ENCODE measurements at regions of chr14 and their contacts with region 1.

Region 1: GRCh38 chr14:79971330-79971729 is 240.0 kb downstream of the DIO2 start:
- DNase-seq: peak; percentile 15
- H3K4me3 ChIP-seq: no peak overlapping the region
- H3K27ac ChIP-seq: no peak overlapping the region
- H3K27me3 ChIP-seq: no peaks in the 10 kb centered on the region
- CTCF ChIP-seq: no peak

Region 2: GRCh38 chr14:78921856-78922255 is 1049.5 kb before region 1 on chr14:
- CTCF ChIA-PET with region 1: no interaction called
- POLR2A ChIA-PET with region 1: interaction called, 11 read pairs
- DNase-seq: peak; percentile 49
- H3K4me3 ChIP-seq: no peak overlapping the region
- H3K27ac ChIP-seq: no peak overlapping the region
- H3K27me3 ChIP-seq: no peaks in the 10 kb centered on the region
- CTCF ChIP-seq: no peak

Region 3: DNA sequence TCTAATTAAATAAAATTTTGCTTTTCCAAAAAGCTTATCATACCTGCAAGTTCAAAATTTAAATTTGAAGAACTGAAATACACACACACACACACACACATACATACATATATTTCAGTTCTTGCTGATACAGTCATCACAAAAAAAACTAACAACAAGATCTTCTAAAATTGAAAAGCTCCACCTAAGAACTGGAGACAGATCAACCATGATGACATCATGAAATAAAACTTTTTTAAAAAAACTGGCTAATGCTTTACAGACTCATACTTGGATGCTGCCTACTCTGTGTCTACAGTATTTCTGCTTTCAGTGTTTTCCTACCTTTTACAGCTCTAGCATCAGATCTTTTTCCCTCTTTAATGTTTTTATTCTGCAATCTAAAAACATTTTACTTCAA is 21.4 kb before region 1 on chr14:
- CTCF ChIA-PET with region 1: interaction called, 25 read pairs
- POLR2A ChIA-PET with region 1: no interaction called
- DNase-seq: no peak
- H3K4me3 ChIP-seq: no peak overlapping the region
- H3K27ac ChIP-seq: no peak overlapping the region
- H3K27me3 ChIP-seq: no peaks in the 10 kb centered on the region
- CTCF ChIP-seq: no peak

Region 4: GRCh38 chr14:80150301-80150700 is 179.0 kb after region 1 on chr14:
- CTCF ChIA-PET with region 1: no interaction called
- POLR2A ChIA-PET with region 1: no interaction called
- DNase-seq: no peak
- H3K4me3 ChIP-seq: no peak overlapping the region
- H3K27ac ChIP-seq: no peak overlapping the region
- H3K27me3 ChIP-seq: no peaks in the 10 kb centered on the region
- CTCF ChIP-seq: no peak